Colonic mucosa (tissue), 4 donors: ENCODE measurements at regions of chr5 and their contacts with region 1.

Region 1: DNA sequence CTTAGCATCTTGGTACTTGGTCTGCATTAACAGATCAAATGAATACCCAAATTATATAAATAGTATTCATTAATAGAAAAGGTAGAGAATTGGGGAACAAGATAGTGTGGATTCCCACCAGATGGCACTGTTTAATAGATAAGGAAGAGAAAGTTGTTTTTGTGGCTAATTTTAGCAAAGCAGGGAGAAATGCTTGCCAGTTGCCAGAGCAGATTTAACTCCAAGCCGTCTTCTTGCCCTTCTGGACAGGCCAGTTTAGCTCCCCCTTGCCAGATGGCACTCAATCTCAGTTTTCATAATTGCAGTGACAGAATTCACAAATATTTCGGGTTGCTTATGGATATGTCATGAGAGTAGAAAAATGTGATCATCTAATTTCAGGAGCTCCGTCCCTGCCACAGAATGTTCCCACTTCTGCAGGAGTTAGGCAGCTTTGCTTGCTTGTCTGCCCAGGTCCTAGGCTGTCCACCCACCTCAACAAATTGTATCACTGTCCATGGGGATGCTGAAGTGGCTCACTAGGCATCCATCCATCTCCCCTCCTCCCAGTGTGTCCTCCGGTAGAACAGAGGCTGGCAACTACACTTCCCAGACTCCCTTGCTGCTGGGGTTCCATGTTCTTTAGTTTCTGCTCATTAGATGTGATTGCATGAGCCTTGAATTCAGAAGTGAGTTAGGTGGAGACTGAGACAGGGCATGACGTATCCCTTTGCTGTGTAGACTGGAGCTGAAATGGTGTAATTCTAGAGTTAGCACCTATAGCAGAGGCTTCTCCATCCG is 11.8 kb upstream of the HEXB start:
- DNase-seq: no peak
- H3K4me3 ChIP-seq: no peak overlapping the region
- H3K27ac ChIP-seq: no peak overlapping the region
- H3K4me1 ChIP-seq: no peaks in the 10 kb centered on the region
- H3K27me3 ChIP-seq: no peaks in the 10 kb centered on the region
- CTCF ChIP-seq: no peak

Region 2: GRCh38 chr5:74919487-74919886 is 246.3 kb after region 1 on chr5:
- intact Hi-C with region 1: loop called (anchors 5 kb)
- DNase-seq: no peak
- H3K4me3 ChIP-seq: no peak overlapping the region
- H3K27ac ChIP-seq: no peak overlapping the region
- H3K4me1 ChIP-seq: no peaks in the 10 kb centered on the region
- H3K27me3 ChIP-seq: no peaks in the 10 kb centered on the region
- CTCF ChIP-seq: peak; percentile 43